Activated CD8-positive, alpha-beta T cell treated with anti-CD3 and anti-CD28 coated beads, Interleukin-2, amount 10 ng/mL, durations not matched to agents 7 days and 5 days (primary cell): ENCODE measurements at regions of chr7 and their contacts with region 1.

Region 1: DNA sequence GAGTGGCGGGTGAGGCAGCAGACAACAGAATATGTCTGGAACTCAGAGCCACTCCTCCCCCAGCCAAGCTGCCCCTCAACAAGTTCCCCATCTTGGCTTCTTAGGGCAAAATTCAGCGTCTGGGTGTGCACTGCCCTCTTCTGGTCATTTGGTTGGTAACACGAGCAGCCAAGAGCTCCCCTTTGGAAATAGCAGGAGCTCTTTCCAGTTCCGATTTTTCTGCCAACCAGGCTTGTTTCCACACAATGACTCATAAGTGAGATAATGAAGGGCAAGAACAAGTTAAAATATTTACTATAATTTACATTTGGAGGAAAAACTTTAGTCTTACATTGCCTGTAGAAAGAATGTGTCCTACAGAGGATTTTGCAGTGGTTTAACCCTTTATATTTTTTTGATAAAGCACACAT is 70.5 kb downstream of the ADCYAP1R1 start:
- DNase-seq: peak; percentile 60
- ATAC-seq: no peak
- H3K4me3 Mint-ChIP-seq: no peak overlapping the region
- H3K27ac Mint-ChIP-seq: no peak overlapping the region
- H3K4me1 Mint-ChIP-seq: no peaks in the 10 kb centered on the region
- H3K27me3 Mint-ChIP-seq: peaks cover 12% of the 10 kb centered on the region

Region 2: DNA sequence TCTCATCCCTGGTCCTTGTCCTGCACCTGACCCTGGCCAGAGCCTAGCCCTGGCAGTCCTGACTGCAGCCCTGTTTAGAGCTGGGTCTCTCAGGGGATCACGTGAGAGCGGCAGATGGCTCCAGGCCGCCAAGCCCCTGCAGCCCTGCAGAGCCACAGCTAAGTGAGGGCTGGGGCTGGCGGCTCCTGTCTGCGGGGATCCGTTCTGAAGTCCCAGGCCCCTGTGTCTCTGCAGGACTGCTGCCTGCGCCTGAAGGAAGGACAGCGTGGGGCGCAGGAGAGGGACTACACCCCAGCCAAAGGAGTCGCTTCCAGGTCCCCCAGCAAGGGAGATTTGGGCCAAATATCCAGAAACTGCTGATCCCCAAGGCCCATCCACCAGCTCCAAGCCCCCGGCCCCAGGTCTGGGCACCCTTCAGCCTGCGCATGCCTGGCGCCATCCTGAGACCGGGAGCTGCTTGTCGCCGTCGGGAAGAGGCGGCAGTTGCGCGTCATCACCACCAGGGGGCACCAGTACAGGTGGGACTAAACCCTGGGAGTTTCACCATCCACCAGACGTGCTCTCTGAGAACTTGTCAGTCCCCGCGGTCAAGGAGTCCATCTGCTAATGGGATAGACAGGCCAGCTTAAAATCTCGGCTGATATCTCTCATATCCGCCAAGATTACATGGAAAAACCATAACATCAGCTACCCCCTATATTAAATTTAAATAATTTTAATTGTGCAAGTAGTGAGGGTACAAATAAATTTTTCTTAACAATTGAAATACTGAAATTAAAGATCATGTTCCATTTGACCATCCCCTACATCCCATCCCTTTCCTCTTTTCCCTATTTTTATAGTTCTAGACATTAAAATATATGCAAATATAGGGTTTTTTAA is 184.0 kb before region 1 on chr7:
- CTCF ChIA-PET with region 1: interaction called, 11 read pairs
- POLR2A ChIA-PET with region 1: no interaction called
- DNase-seq: peak; percentile 72
- ATAC-seq: peak; percentile 81
- H3K4me3 Mint-ChIP-seq: no peak overlapping the region
- H3K27ac Mint-ChIP-seq: no peak overlapping the region
- H3K4me1 Mint-ChIP-seq: no peaks in the 10 kb centered on the region
- H3K27me3 Mint-ChIP-seq: peaks cover 27% of the 10 kb centered on the region

Region 3: DNA sequence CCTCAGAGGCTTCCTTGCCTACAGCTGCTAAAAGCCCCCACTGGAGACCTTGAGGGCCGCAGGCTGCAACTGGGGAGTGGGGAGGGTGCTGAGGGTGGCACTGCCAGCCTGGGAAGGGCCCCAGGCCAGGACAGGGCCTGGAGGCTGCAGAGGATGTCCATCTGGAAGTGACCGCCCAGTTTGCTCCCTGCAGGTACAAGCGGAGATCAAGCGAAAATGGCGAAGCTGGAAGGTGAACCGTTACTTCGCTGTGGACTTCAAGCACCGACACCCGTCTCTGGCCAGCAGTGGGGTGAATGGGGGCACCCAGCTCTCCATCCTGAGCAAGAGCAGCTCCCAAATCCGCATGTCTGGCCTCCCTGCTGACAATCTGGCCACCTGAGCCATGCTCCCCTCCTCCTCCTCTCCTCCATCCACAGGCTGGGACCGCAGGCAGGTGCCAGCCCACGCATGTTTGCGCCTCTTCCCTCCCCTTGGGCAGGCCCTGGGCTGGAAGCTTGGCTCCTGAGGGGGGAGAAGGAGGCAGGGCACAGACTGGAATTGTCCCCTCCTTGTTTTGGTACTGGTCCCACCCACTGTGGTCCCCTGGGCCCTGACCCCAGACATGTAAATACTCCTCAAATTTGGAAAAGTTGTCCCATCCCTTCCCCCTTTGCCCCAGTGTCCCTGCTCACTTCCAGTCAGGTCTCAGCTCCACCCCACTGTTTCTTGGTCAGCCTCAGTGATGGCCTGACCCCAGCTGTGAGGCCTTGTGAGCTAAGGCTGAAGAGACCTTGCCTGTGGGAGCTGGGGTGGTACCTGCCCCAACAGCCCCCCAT is 16.1 kb before region 1 on chr7:
- CTCF ChIA-PET with region 1: interaction called, 11 read pairs
- POLR2A ChIA-PET with region 1: no interaction called
- DNase-seq: no peak
- ATAC-seq: no peak
- H3K4me3 Mint-ChIP-seq: no peak overlapping the region
- H3K27ac Mint-ChIP-seq: no peak overlapping the region
- H3K4me1 Mint-ChIP-seq: no peaks in the 10 kb centered on the region
- H3K27me3 Mint-ChIP-seq: no peaks in the 10 kb centered on the region

Region 4: GRCh38 chr7:31134246-31135188 is 11.9 kb after region 1 on chr7:
- CTCF ChIA-PET with region 1: interaction called, 51 read pairs
- POLR2A ChIA-PET with region 1: no interaction called
- DNase-seq: peak; percentile 64
- ATAC-seq: peak; percentile 78
- H3K4me3 Mint-ChIP-seq: no peak overlapping the region
- H3K27ac Mint-ChIP-seq: no peak overlapping the region
- H3K4me1 Mint-ChIP-seq: peaks cover 2% of the 10 kb centered on the region
- H3K27me3 Mint-ChIP-seq: peaks cover 2% of the 10 kb centered on the region

Region 5: GRCh38 chr7:31336202-31337001 is 213.7 kb after region 1 on chr7:
- CTCF ChIA-PET with region 1: no interaction called
- POLR2A ChIA-PET with region 1: no interaction called
- DNase-seq: no peak
- ATAC-seq: no peak
- H3K4me3 Mint-ChIP-seq: no peak overlapping the region
- H3K27ac Mint-ChIP-seq: no peak overlapping the region
- H3K4me1 Mint-ChIP-seq: no peaks in the 10 kb centered on the region
- H3K27me3 Mint-ChIP-seq: peaks cover 14% of the 10 kb centered on the region